ENCODE measurements at regions of chr1 and their contacts with region 1.

Region 1: DNA sequence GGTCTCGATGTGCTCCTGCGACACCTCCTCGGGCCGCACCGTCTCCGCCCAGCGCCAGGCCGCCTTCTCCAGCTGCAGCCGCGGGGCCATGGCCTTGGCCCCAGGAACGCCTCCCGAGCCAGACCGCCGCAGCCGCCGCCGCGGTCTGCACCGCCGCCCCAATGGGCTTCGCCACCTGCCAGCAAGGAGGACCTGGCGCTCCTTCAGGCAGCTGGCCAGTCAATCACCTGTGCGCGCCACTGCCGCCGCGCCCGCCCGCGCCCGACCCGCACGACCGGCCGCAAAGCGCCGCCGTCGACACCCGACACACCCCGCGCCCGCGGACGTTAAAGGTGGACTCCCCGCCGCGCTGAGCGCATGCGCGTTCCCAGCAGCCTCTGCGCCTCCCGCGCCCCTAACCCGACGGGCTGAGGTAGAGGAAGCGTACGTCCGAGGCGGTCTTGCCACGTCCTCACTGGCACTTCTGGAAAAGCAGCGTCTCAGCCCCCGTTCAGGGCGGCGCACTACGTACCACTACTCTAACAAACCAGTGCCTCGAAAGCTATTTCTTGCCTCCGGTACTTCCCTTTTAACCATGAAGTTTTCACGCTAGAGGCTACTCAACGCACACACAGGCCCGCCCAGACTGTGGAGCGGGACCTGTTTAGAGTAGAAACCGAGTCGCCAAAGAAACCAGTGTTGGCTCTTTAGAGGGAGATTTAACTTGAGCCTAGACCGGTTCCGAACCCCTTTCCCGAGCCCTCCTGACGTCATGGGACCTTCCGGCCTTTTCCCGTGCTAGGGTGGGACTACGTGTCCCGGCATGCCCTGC is at the start of gene USP48:
- DNase-seq: peak; percentile 97
- H3K4me3 Mint-ChIP-seq: peak within 1 kb of the TSS; percentile 95
- H3K27ac Mint-ChIP-seq: peak within 1 kb of the TSS; percentile 100
- H3K4me1 Mint-ChIP-seq: peaks cover 25% of the 10 kb centered on the region
- H3K27me3 Mint-ChIP-seq: no peaks in the 10 kb centered on the region
- total RNA-seq, gene USP48: 89.9 to 93.4 TPM

Region 2: GRCh38 chr1:21176586-21177555 is 606.2 kb before region 1 on chr1 and contains the start of gene EIF4G3:
- CTCF ChIA-PET with region 1: no interaction called
- intact Hi-C with region 1: loop called (anchors 5 kb)
- DNase-seq: peak; percentile 100
- H3K4me3 Mint-ChIP-seq: peak within 1 kb of the TSS; percentile 83
- H3K27ac Mint-ChIP-seq: peak within 1 kb of the TSS; percentile 92
- H3K4me1 Mint-ChIP-seq: peaks cover 24% of the 10 kb centered on the region
- H3K27me3 Mint-ChIP-seq: no peaks in the 10 kb centered on the region
- total RNA-seq, gene EIF4G3: 44.6 to 48.0 TPM

Region 3: GRCh38 chr1:21659099-21659923 is 123.8 kb before region 1 on chr1:
- CTCF ChIA-PET with region 1: interaction called, 5 read pairs
- intact Hi-C with region 1: loop called (anchors 2 kb)
- DNase-seq: peak; percentile 80
- H3K4me3 Mint-ChIP-seq: peak overlapping the region; percentile 22
- H3K27ac Mint-ChIP-seq: no peak overlapping the region
- H3K4me1 Mint-ChIP-seq: peaks cover 5% of the 10 kb centered on the region
- H3K27me3 Mint-ChIP-seq: peaks cover 20% of the 10 kb centered on the region

Region 4: DNA sequence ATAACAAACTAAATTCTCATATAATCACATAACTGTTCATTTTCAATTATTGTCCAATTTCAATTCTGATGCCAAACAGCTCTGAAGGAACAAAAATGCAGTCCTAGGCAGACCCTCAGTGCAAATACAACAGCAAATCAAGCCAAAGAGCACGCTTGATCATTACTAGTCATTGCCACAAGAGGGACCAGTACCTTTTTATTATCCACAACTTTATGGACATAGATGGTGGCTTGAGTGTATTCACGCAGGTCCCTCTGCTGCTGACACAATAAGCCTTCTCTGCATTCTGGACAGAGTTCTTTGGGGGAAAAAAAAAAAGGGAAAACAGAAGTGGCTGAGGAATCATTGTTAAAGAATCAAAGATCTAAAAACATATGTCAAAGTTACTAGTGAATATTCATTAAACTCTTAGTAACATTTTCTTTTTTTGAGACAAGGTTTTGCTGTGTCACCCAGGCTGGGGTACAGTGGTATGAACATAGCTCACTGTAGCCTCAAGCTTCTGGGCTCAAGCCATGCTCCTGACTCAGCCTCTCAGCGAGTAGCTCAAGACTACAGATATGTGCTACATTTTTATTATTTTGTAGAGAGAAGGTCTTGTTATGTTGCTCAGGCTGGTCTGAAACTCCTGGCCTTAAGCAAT is 79.6 kb before region 1 on chr1:
- CTCF ChIA-PET with region 1: interaction called, 3 read pairs
- intact Hi-C with region 1: loop called (anchors 1 kb)
- DNase-seq: no peak
- H3K4me3 Mint-ChIP-seq: no peak overlapping the region
- H3K27ac Mint-ChIP-seq: no peak overlapping the region
- H3K4me1 Mint-ChIP-seq: peaks cover 4% of the 10 kb centered on the region
- H3K27me3 Mint-ChIP-seq: no peaks in the 10 kb centered on the region

Region 5: GRCh38 chr1:21734526-21734925 is 48.5 kb before region 1 on chr1:
- CTCF ChIA-PET with region 1: no interaction called
- intact Hi-C with region 1: no loop called
- DNase-seq: no peak
- H3K4me3 Mint-ChIP-seq: no peak overlapping the region
- H3K27ac Mint-ChIP-seq: no peak overlapping the region
- H3K4me1 Mint-ChIP-seq: no peaks in the 10 kb centered on the region
- H3K27me3 Mint-ChIP-seq: no peaks in the 10 kb centered on the region

Region 6: GRCh38 chr1:21766210-21766609 is 16.9 kb before region 1 on chr1:
- CTCF ChIA-PET with region 1: interaction called, 3 read pairs
- intact Hi-C with region 1: loop called (anchors 1 kb)
- DNase-seq: no peak
- H3K4me3 Mint-ChIP-seq: no peak overlapping the region
- H3K27ac Mint-ChIP-seq: peak overlapping the region; percentile 4
- H3K4me1 Mint-ChIP-seq: peaks cover 69% of the 10 kb centered on the region
- H3K27me3 Mint-ChIP-seq: no peaks in the 10 kb centered on the region

Region 7: GRCh38 chr1:21963477-21964217 is 180.6 kb after region 1 on chr1:
- CTCF ChIA-PET with region 1: interaction called, 3 read pairs
- intact Hi-C with region 1: loop called (anchors 2 kb)
- DNase-seq: peak; percentile 94
- H3K4me3 Mint-ChIP-seq: no peak overlapping the region
- H3K27ac Mint-ChIP-seq: peak overlapping the region; percentile 11
- H3K4me1 Mint-ChIP-seq: peaks cover 3% of the 10 kb centered on the region
- H3K27me3 Mint-ChIP-seq: no peaks in the 10 kb centered on the region

Region 8: DNA sequence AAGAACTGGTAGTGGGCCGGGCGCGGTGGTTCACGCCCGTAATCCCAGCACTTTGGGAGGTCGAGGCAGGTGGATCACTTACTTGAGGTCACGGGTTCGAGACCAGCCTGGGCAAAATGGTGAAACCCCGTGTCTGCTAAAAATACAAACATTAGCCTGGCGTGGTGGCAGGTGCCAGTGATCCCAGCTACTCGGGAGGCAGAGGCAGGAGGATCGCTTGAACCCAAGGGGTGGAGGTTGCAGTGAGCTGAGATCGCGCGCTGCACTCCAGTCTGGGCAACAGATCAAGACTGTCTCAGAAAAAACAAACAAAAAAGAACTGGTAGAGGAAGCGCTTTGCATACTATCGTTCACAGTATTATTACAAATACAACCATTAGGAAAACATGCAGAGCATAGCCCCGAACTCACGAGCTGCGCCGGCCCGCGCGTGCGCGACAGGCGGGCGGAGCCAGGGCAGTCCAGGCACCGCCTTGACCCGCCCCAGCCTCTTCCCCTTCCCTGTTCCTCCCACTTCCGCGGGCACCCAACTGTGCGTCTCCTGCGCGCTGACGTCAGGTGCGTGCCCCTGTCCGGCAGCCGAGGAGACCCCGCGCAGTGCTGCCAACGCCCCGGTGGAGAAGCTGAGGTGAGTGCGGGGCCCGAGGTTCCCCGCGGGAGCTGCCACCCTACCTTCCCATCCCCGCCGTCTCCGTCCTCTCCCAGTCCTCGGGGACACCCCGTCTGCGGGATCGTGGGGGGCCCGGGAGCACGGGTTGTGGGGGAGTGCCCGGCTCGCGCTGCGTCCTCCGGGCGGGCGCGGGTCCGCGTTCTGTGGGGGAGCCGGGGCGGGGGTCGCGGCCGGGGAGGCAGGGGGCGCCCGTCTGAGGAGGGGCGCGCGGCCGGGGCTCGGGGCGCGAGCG is 269.3 kb after region 1 on chr1 and contains the start of gene CDC42:
- CTCF ChIA-PET with region 1: no interaction called
- intact Hi-C with region 1: loop called (anchors 2 kb)
- DNase-seq: peak; percentile 98
- H3K4me3 Mint-ChIP-seq: peak within 1 kb of the TSS; percentile 95
- H3K27ac Mint-ChIP-seq: peak within 1 kb of the TSS; percentile 98
- H3K4me1 Mint-ChIP-seq: peaks cover 63% of the 10 kb centered on the region
- H3K27me3 Mint-ChIP-seq: no peaks in the 10 kb centered on the region
- total RNA-seq, gene CDC42: 318 to 322 TPM